SK-N-SH (cell line): ENCODE measurements at regions of chr22 and their contacts with region 1.

Region 1: GRCh38 chr22:24768537-24769374 is 5.8 kb downstream of the PIWIL3 start:
- DNase-seq: peak; percentile 85
- H3K4me3 ChIP-seq: no peak overlapping the region; a peak in 1 of 4 replicates
- H3K27ac ChIP-seq: no peak overlapping the region
- H3K4me1 ChIP-seq: no peaks in the 10 kb centered on the region
- H3K27me3 ChIP-seq: no peaks in the 10 kb centered on the region; the same call in 1 of the 2 replicates
- CTCF ChIP-seq: peak; percentile 78
- EP300 ChIP-seq: no peak
- RAD21 ChIP-seq: peak; percentile 94

Region 2: DNA sequence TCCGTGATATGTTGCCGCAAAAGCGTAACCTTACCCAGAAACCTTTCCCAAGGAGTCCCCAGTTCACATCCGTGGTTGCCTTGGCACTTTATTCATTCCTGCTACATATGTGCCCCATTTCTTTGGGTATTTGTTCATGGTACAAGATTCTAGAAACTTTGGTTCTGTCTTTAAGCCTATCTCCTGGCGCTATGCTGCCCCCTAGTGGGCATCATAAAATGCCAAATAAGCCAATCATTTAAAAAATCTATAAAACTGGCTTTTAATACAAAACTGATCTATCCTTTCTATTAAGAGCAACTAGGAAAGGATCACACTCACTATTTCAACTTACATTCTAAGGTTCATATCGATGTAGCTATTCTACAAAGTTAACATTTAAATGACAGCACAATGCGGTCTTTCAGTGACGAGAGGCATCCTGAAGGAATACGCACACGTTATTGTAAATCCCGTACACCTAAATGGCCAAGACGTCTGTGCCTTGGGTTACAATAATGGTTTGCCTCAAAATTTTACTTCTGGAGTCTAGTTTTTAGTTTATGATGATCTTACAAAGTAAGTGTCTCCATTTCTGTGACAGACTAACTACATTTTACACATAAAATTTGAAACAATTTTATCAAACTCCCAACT is 10.5 kb before region 1 on chr22:
- CTCF ChIA-PET with region 1: interaction called, 44 read pairs
- POLR2A ChIA-PET with region 1: no interaction called
- DNase-seq: peak; percentile 57
- H3K4me3 ChIP-seq: no peak overlapping the region; a peak in 1 of 4 replicates
- H3K27ac ChIP-seq: no peak overlapping the region
- H3K4me1 ChIP-seq: no peaks in the 10 kb centered on the region
- H3K27me3 ChIP-seq: peaks cover 24% of the 10 kb centered on the region; the same call in 1 of the 2 replicates
- CTCF ChIP-seq: peak; percentile 96
- EP300 ChIP-seq: no peak
- RAD21 ChIP-seq: peak; percentile 90

Region 3: GRCh38 chr22:24803011-24803542 is 34.3 kb after region 1 on chr22:
- CTCF ChIA-PET with region 1: interaction called, 72 read pairs
- POLR2A ChIA-PET with region 1: interaction called, 4 read pairs
- DNase-seq: peak; percentile 78
- H3K4me3 ChIP-seq: peak overlapping the region in 1 of 2 experiments; percentile 36; a peak in 1 of 4 replicates
- H3K27ac ChIP-seq: no peak overlapping the region
- H3K4me1 ChIP-seq: peaks cover 0 to 12% of the 10 kb centered on the region in 2 experiments; a peak in 2 of 4 replicates
- H3K27me3 ChIP-seq: no peaks in the 10 kb centered on the region
- CTCF ChIP-seq: peak; percentile 88
- EP300 ChIP-seq: no peak
- RAD21 ChIP-seq: peak; percentile 58

Region 4: GRCh38 chr22:24845041-24845898 is 76.5 kb after region 1 on chr22:
- CTCF ChIA-PET with region 1: interaction called, 208 read pairs
- POLR2A ChIA-PET with region 1: no interaction called
- DNase-seq: no peak
- H3K4me3 ChIP-seq: no peak overlapping the region
- H3K27ac ChIP-seq: no peak overlapping the region
- H3K4me1 ChIP-seq: no peaks in the 10 kb centered on the region; a peak in 1 of 4 replicates
- H3K27me3 ChIP-seq: no peaks in the 10 kb centered on the region
- CTCF ChIP-seq: no peak
- EP300 ChIP-seq: no peak
- RAD21 ChIP-seq: no peak

Region 5: DNA sequence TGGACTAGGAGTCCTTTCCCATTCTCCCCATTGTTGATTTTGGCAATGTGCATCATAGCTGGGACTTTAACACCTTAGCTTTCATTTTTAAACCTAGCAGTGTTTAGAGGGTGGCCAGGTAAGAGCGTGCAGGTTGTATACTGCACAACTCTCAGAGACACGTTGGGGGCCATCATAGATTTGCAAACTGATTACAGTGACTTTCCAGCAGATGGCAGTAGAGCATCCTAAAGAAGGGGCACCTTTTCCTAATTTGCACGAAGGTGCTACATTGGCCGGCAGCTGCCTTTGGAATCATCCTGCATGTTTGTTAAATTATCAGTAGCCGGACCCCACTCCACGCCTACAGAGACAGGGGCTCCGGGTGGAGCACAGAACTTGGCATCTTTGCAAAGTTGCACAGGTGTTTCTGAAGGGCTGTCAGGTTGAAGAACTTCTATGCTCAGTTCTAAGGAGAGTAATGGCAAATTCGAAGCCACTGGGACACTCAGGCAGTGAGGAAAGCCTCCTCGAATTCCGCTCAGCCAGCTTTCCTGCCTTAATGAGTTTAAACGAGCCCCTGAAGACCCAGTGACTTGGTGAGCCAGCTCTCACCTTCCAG is 170.1 kb after region 1 on chr22:
- CTCF ChIA-PET with region 1: interaction called, 25 read pairs
- POLR2A ChIA-PET with region 1: no interaction called
- DNase-seq: peak; percentile 76
- H3K4me3 ChIP-seq: no peak overlapping the region; a peak in 1 of 4 replicates
- H3K27ac ChIP-seq: no peak overlapping the region
- H3K4me1 ChIP-seq: peaks cover 0 to 3% of the 10 kb centered on the region in 2 experiments; a peak in 1 of 4 replicates
- H3K27me3 ChIP-seq: 0 out of 2 replicates have a peak, but pooled peaks cover 12% of the 10 kb centered on the region
- CTCF ChIP-seq: peak; percentile 86
- EP300 ChIP-seq: no peak
- RAD21 ChIP-seq: peak; percentile 79

Region 6: GRCh38 chr22:25057013-25057881 is 288.5 kb after region 1 on chr22:
- CTCF ChIA-PET with region 1: interaction called, 33 read pairs
- POLR2A ChIA-PET with region 1: no interaction called
- DNase-seq: peak; percentile 79
- H3K4me3 ChIP-seq: peak overlapping the region in 1 of 2 experiments; percentile 36; a peak in 1 of 4 replicates
- H3K27ac ChIP-seq: no peak overlapping the region
- H3K4me1 ChIP-seq: peaks cover 0 to 15% of the 10 kb centered on the region in 2 experiments; a peak in 1 of 4 replicates
- H3K27me3 ChIP-seq: no peaks in the 10 kb centered on the region
- CTCF ChIP-seq: peak; percentile 73
- EP300 ChIP-seq: no peak
- RAD21 ChIP-seq: peak; percentile 76

Region 7: GRCh38 chr22:25091458-25091857 is 322.7 kb after region 1 on chr22:
- CTCF ChIA-PET with region 1: no interaction called
- POLR2A ChIA-PET with region 1: no interaction called
- DNase-seq: no peak
- H3K4me3 ChIP-seq: no peak overlapping the region
- H3K27ac ChIP-seq: no peak overlapping the region
- H3K4me1 ChIP-seq: peaks cover 0 to 6% of the 10 kb centered on the region in 2 experiments; a peak in 1 of 4 replicates
- H3K27me3 ChIP-seq: no peaks in the 10 kb centered on the region
- CTCF ChIP-seq: no peak
- EP300 ChIP-seq: no peak
- RAD21 ChIP-seq: no peak